Left cardiac atrium (tissue), 4 donors: ENCODE measurements at regions of chr11 and their contacts with region 1.

Region 1: DNA sequence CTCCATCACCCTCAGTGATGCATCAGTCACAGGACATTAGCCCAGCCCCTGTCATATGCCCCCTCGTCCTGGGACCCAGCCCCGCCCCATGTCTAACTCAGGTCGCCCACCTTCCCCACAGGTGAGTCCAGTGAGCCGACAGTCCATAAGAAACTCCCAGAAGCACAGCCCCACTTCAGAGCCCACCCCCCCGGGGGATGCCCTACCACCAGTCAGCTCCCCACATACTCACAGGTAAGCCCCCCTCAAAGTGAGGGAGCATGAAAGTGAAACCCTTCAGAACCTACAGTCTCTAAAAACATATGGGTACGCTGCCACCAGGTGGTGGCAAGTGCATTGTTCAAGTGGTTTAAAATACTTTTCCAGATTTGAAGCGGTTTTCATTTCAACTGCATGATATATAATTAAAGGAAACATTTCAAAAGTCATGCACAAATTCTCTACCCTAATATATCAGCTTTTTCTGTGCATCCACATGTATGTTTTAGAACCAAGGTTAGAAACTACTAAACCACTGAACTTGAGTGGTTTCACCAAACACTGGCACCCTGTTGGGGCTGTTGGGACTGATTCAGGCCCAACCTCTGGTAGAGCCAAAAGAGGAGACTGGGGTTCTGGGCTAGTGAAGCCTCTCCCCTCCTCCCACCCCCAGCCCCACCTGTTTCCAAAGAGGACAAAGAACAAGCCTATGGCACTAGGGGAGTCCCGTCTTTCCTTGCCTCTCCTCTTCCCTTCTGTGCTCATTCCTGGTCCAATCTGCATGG is 17.3 kb downstream of the EPS8L2 start:
- DNase-seq: peak; percentile 48
- ATAC-seq: no peak

Region 2: GRCh38 chr11:554824-555472 is 168.4 kb before region 1 on chr11:
- intact Hi-C with region 1: loop called (anchors 5 kb)
- DNase-seq: peak; percentile 69
- ATAC-seq: peak; percentile 74 to 75

Region 3: DNA sequence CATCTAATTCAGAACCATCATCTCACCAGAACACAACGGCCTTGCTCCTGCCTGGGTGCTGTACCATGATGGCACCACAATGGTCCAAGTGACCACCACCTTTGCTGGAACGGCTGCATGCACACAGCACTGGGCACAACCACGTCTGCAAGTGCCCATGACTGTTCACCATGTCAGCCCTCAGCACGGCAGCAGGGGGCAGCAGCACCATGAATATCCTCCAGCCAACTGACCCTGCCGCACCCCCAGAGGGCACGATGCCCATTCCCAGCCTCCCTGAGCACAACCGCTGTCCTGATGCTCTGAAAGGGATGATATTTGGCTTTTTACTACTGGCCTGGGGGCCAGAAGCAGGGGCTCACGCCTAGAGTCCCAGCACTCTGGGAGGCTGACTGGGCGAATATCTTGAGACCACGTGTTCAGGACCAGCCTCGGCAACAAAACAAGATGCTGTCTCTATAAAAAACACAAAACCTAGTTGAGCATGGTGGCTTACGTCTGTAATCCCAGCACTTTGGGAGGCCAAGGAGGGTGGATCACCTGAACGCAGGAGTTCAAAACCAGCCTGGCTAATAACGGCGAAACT is 60.5 kb before region 1 on chr11:
- intact Hi-C with region 1: loop called (anchors 5 kb)
- DNase-seq: peak; percentile 76
- ATAC-seq: peak; percentile 81 to 85

Region 4: DNA sequence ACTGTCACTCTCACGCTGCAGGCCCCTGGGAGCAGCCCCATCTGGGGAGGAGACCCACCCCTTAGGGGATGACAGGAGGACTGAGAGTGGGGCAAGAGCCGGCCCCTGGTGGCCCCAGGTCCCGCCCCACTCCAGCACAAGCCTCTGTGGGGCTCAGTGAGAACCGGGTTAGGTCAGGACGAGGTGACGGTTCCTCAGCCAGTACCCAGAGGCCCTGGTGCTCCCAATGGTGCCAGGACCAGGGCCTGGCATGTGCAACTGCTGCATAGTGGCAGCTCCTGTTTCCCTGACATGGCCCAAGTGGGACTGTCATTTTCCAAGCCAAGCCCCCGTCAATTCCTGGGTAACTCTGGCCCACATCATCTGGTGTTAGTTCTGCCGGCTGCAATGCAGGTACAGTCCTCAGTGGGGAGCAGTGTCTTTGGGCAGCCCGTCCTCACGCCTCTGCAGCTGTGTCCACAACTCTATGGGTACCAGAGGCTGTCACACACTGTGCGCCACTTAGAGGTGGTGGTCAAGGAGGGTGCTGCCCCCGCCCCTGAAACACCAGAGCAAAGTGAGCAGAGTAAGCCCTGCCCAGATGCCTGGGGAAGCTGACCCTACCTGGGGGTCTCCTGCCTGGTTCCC is 171.4 kb after region 1 on chr11:
- intact Hi-C with region 1: no loop called
- DNase-seq: no peak
- ATAC-seq: no peak